ENCODE measurements at regions of chr9 and their contacts with region 1.

Region 1: GRCh38 chr9:19379697-19380046 is 364 bp downstream of the RPS6 start:
- DNase-seq: peak in 5 of 9 experiments; percentile 37 to 71 (median 53)
- ATAC-seq: peak; percentile 49
- H3K4me3 ChIP-seq: peak overlapping the region; percentile 67 to 90
- H3K4me3 Mint-ChIP-seq: peak overlapping the region; percentile 95
- H3K27ac ChIP-seq: peak overlapping the region; percentile 85 to 93
- H3K27ac Mint-ChIP-seq: peak overlapping the region; percentile 98
- H3K4me1 ChIP-seq: peaks cover 29% of the 10 kb centered on the region
- H3K4me1 Mint-ChIP-seq: peaks cover 40% of the 10 kb centered on the region
- H3K27me3 ChIP-seq: no peaks in the 10 kb centered on the region
- H3K27me3 Mint-ChIP-seq: no peaks in the 10 kb centered on the region
- CTCF ChIP-seq: no peak

Region 2: DNA sequence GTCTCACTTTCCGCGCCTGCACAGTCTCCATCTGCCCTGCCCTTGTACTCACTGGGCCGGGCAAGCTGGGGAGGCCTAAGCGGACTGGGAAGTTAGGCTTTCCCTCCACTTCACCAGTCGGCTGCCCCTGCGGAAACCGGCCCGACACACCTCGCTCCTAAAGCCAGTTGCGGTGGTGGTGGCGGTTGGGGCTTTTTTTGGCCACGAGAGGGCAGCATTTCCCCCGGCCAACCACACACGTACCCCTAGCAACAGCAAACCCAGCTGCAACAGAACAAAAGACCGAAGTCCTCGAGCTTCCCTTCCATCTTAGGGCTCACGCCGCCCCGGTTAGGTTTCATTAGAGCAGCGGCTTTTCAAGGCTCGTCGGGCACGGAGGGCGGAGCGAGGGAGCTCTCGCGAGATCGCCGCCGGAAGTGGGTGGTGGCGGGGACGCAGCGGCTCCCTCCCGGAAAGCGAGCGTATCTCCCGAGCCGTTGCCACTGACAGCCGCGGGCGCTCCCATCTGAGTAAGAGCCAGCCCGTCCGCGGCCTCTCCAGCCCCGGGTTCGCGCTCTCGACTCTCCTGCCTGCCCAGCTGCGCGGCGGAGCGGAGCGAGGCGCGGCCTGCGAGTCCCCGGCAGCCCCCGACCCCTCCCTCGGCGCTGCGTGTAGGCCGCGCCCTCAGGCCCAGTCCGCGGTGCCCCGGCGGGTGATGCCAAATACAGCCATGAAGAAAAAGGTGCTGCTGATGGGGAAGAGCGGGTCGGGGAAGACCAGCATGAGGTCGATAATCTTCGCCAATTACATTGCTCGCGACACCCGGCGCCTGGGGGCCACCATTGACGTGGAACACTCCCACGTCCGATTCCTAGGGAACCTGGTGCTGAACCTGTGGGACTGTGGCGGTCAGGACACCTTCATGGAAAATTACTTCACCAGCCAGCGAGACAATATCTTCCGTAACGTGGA is 330.4 kb before region 1 on chr9 and contains the start of gene RRAGA:
- CTCF ChIA-PET with region 1: no interaction called
- POLR2A ChIA-PET with region 1: interaction called, 17 read pairs
- intact Hi-C with region 1: loop called (anchors 1 kb)
- DNase-seq: peak; percentile 88 to 97 (median 93)
- ATAC-seq: peak; percentile 88
- H3K4me3 ChIP-seq: peak within 1 kb of the TSS; percentile 69 to 89
- H3K4me3 Mint-ChIP-seq: peak within 1 kb of the TSS; percentile 95
- H3K27ac ChIP-seq: peak within 1 kb of the TSS; percentile 80 to 96
- H3K27ac Mint-ChIP-seq: peak within 1 kb of the TSS; percentile 97
- H3K4me1 ChIP-seq: peaks cover 19% of the 10 kb centered on the region
- H3K4me1 Mint-ChIP-seq: peaks cover 40% of the 10 kb centered on the region
- H3K27me3 ChIP-seq: no peaks in the 10 kb centered on the region
- H3K27me3 Mint-ChIP-seq: no peaks in the 10 kb centered on the region
- CTCF ChIP-seq: peak; percentile 56
- total RNA-seq, gene RRAGA: 36.0 to 38.0 TPM

Region 3: DNA sequence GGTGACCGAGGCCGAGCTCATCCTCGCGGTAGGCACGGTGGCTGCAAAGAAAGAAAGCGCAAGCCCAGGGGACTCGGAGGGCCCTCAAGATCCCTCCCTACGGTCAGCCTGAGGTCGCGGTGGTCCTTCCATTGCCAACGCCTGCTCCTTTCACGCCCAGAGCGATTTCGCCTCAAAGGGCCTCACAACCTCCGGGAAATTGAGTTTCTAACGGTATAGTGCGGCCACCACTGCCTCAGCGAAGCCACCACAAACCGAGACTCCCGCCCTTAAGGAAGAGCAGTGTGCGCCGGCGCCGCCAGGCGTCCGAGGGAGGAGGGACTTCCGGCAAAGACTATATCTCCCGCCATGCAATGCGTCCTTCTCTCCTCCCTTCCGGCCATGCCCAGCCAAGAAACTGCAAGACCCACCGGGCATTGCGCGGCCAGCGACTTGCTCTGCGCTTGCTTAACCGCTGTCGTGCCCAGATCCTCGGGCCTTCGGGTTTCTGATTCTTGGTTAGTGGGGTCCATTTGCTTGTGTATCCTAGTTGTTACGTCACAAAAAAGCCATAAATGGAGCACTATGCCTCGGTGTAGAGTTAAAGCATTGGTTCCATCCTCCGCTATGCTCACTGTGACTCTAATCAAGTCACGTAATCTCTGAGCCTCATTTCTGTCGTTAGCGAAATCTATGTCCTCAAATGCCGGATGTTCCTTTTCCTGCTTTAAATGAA is 276.9 kb before region 1 on chr9 and contains the start of gene HAUS6:
- CTCF ChIA-PET with region 1: no interaction called
- POLR2A ChIA-PET with region 1: no interaction called
- intact Hi-C with region 1: loop called (anchors 1 to 2 kb)
- DNase-seq: peak; percentile 73 to 98 (median 92)
- ATAC-seq: peak; percentile 92
- H3K4me3 ChIP-seq: peak within 1 kb of the TSS; percentile 51 to 71
- H3K4me3 Mint-ChIP-seq: peak within 1 kb of the TSS; percentile 96
- H3K27ac ChIP-seq: peak within 1 kb of the TSS; percentile 58 to 83
- H3K27ac Mint-ChIP-seq: peak within 1 kb of the TSS; percentile 94
- H3K4me1 ChIP-seq: peaks cover 19% of the 10 kb centered on the region
- H3K4me1 Mint-ChIP-seq: peaks cover 29% of the 10 kb centered on the region
- H3K27me3 ChIP-seq: no peaks in the 10 kb centered on the region
- H3K27me3 Mint-ChIP-seq: no peaks in the 10 kb centered on the region
- CTCF ChIP-seq: no peak
- total RNA-seq, gene HAUS6: 14.2 to 16.5 TPM

Region 4: DNA sequence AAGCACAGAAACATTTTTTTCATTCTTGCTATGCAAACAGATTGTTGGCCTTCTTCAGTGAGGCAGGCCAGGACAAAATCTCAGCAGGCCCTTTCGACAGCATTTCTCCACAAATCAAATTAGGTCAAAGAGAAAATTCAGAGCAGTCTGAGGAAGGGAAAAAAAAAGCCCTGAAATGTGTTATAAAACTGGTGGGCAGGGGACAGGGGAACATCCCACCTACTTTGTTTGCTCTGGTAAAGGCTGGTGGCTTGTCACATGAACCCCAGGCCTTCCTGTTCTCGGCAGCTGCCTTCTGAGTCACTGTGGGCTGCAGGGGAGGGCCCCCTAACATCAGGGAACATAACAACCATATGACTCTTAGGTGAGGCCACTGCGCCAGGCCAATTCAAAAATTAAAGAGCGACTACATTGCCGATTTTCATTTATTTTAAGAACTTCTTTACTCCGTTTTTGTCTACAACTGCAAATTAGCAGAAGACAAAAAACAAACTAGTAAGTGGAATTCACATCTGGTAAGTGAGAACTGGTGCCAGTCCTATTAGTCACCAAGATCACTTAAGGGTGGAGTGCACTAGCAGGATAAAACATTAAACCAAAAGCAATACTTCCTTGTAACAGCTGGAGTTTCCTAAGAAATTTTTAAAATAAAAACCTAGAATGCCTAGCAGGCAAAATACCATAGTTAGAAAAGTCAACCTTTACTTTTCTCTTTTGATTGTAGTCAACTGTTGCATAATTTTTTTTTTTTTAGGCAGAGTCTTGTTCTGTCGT is 195.3 kb before region 1 on chr9:
- CTCF ChIA-PET with region 1: no interaction called
- POLR2A ChIA-PET with region 1: interaction called, 8 read pairs
- intact Hi-C with region 1: loop called (anchors 2 to 5 kb)
- DNase-seq: peak; percentile 49 to 94 (median 82)
- ATAC-seq: peak; percentile 99
- H3K4me3 ChIP-seq: peak overlapping the region in 1 of 2 experiments; percentile 3
- H3K4me3 Mint-ChIP-seq: peak overlapping the region; percentile 71
- H3K27ac ChIP-seq: peak overlapping the region; percentile 55 to 87
- H3K27ac Mint-ChIP-seq: peak overlapping the region; percentile 96
- H3K4me1 ChIP-seq: peaks cover 34% of the 10 kb centered on the region
- H3K4me1 Mint-ChIP-seq: peaks cover 25% of the 10 kb centered on the region
- H3K27me3 ChIP-seq: no peaks in the 10 kb centered on the region
- H3K27me3 Mint-ChIP-seq: no peaks in the 10 kb centered on the region
- CTCF ChIP-seq: no peak

Region 5: GRCh38 chr9:19358701-19359100 is 21.0 kb before region 1 on chr9:
- CTCF ChIA-PET with region 1: no interaction called
- POLR2A ChIA-PET with region 1: no interaction called
- intact Hi-C with region 1: no loop called
- DNase-seq: no peak
- ATAC-seq: no peak
- H3K4me3 ChIP-seq: no peak overlapping the region
- H3K4me3 Mint-ChIP-seq: no peak overlapping the region
- H3K27ac ChIP-seq: no peak overlapping the region
- H3K27ac Mint-ChIP-seq: no peak overlapping the region
- H3K4me1 ChIP-seq: no peaks in the 10 kb centered on the region
- H3K4me1 Mint-ChIP-seq: no peaks in the 10 kb centered on the region
- H3K27me3 ChIP-seq: no peaks in the 10 kb centered on the region
- H3K27me3 Mint-ChIP-seq: no peaks in the 10 kb centered on the region
- CTCF ChIP-seq: no peak

Region 6: GRCh38 chr9:19408693-19409400 is 29.2 kb after region 1 on chr9 and contains the start of gene ACER2:
- CTCF ChIA-PET with region 1: no interaction called
- POLR2A ChIA-PET with region 1: interaction called, 17 read pairs
- intact Hi-C with region 1: loop called (anchors 1 kb)
- DNase-seq: peak; percentile 85 to 99 (median 93)
- ATAC-seq: peak; percentile 97
- H3K4me3 ChIP-seq: peak within 1 kb of the TSS; percentile 86 to 97
- H3K4me3 Mint-ChIP-seq: peak within 1 kb of the TSS; percentile 93
- H3K27ac ChIP-seq: peak within 1 kb of the TSS; percentile 44 to 46
- H3K27ac Mint-ChIP-seq: peak within 1 kb of the TSS; percentile 69
- H3K4me1 ChIP-seq: peaks cover 14% of the 10 kb centered on the region
- H3K4me1 Mint-ChIP-seq: peaks cover 16% of the 10 kb centered on the region
- H3K27me3 ChIP-seq: no peaks in the 10 kb centered on the region
- H3K27me3 Mint-ChIP-seq: no peaks in the 10 kb centered on the region
- CTCF ChIP-seq: no peak
- total RNA-seq, gene ACER2: 0.62 to 1.2 TPM

Region 7: GRCh38 chr9:19456996-19457692 is 77.5 kb after region 1 on chr9:
- CTCF ChIA-PET with region 1: interaction called, 3 read pairs
- POLR2A ChIA-PET with region 1: interaction called, 3 read pairs
- intact Hi-C with region 1: loop called (anchors 1 to 2 kb)
- DNase-seq: peak; percentile 10 to 81 (median 59)
- ATAC-seq: peak; percentile 96
- H3K4me3 ChIP-seq: no peak overlapping the region
- H3K4me3 Mint-ChIP-seq: peak overlapping the region; percentile 24
- H3K27ac ChIP-seq: no peak overlapping the region
- H3K27ac Mint-ChIP-seq: no peak overlapping the region
- H3K4me1 ChIP-seq: peaks cover 7% of the 10 kb centered on the region
- H3K4me1 Mint-ChIP-seq: peaks cover 5% of the 10 kb centered on the region
- H3K27me3 ChIP-seq: no peaks in the 10 kb centered on the region
- H3K27me3 Mint-ChIP-seq: peaks cover 5% of the 10 kb centered on the region
- CTCF ChIP-seq: peak; percentile 89

Region 8: GRCh38 chr9:20307621-20308020 is 927.9 kb after region 1 on chr9:
- CTCF ChIA-PET with region 1: no interaction called
- POLR2A ChIA-PET with region 1: no interaction called
- intact Hi-C with region 1: no loop called
- DNase-seq: no peak
- ATAC-seq: no peak
- H3K4me3 ChIP-seq: no peak overlapping the region
- H3K4me3 Mint-ChIP-seq: no peak overlapping the region
- H3K27ac ChIP-seq: no peak overlapping the region
- H3K27ac Mint-ChIP-seq: no peak overlapping the region
- H3K4me1 ChIP-seq: no peaks in the 10 kb centered on the region
- H3K4me1 Mint-ChIP-seq: peaks cover 2% of the 10 kb centered on the region
- H3K27me3 ChIP-seq: no peaks in the 10 kb centered on the region
- H3K27me3 Mint-ChIP-seq: no peaks in the 10 kb centered on the region
- CTCF ChIP-seq: no peak

Region 9: GRCh38 chr9:21031091-21031807 is 1651.6 kb after region 1 on chr9 and contains the start of gene HACD4:
- CTCF ChIA-PET with region 1: no interaction called
- POLR2A ChIA-PET with region 1: no interaction called
- intact Hi-C with region 1: loop called in 1 of 2 experiments (anchors 5 kb)
- DNase-seq: peak; percentile 40 to 83 (median 68)
- ATAC-seq: peak; percentile 82
- H3K4me3 ChIP-seq: peak within 1 kb of the TSS; percentile 75 to 94
- H3K4me3 Mint-ChIP-seq: peak within 1 kb of the TSS; percentile 84
- H3K27ac ChIP-seq: peak within 1 kb of the TSS; percentile 79 to 85
- H3K27ac Mint-ChIP-seq: peak within 1 kb of the TSS; percentile 88
- H3K4me1 ChIP-seq: peaks cover 41% of the 10 kb centered on the region
- H3K4me1 Mint-ChIP-seq: peaks cover 24% of the 10 kb centered on the region
- H3K27me3 ChIP-seq: no peaks in the 10 kb centered on the region
- H3K27me3 Mint-ChIP-seq: no peaks in the 10 kb centered on the region
- CTCF ChIP-seq: no peak
- total RNA-seq, gene HACD4: 5.9 to 6.3 TPM